GM12878 (cell line): ENCODE measurements at regions of chr12 and their contacts with region 1.

Region 1: GRCh38 chr12:38324896-38325295 is 8.3 kb downstream of the ALG10B start:
- DNase-seq: no peak
- ATAC-seq: no peak
- H3K4me3 ChIP-seq: no peak overlapping the region
- H3K27ac ChIP-seq: no peak overlapping the region
- H3K4me1 ChIP-seq: no peaks in the 10 kb centered on the region
- H3K27me3 ChIP-seq: no peaks in the 10 kb centered on the region
- CTCF ChIP-seq: no peak
- EP300 ChIP-seq: no peak
- POLR2A ChIP-seq: no peak
- RAD21 ChIP-seq: no peak

Region 2: DNA sequence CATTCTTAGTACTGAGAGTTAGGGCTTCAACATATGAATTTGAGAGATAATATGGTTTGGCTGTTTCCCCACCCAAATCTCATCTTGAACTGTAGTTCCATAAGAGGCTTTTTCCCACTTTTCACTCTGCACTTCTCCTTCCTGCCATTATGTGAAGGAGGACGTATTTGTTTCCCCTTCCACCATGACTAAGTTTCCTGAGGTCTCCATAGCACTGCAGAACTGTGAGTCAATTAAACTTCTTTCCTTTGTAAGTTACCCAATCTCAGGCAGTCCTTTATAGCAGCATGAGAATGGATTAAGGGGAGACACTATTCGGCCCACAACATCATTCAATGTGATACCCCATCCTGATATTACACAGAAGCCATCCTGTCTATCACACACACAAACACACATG is 45.1 kb before region 1 on chr12:
- CTCF ChIA-PET with region 1: no interaction called
- POLR2A ChIA-PET with region 1: no interaction called
- RAD21 ChIA-PET with region 1: no interaction called
- SMC1A ChIA-PET with region 1: no interaction called
- in situ Hi-C with region 1: no loop called
- intact Hi-C with region 1: no loop called
- DNase-seq: no peak
- ATAC-seq: no peak
- H3K4me3 ChIP-seq: no peak overlapping the region
- H3K27ac ChIP-seq: no peak overlapping the region
- H3K4me1 ChIP-seq: no peaks in the 10 kb centered on the region
- H3K27me3 ChIP-seq: no peaks in the 10 kb centered on the region
- CTCF ChIP-seq: no peak
- EP300 ChIP-seq: no peak
- POLR2A ChIP-seq: no peak
- RAD21 ChIP-seq: no peak

Region 3: DNA sequence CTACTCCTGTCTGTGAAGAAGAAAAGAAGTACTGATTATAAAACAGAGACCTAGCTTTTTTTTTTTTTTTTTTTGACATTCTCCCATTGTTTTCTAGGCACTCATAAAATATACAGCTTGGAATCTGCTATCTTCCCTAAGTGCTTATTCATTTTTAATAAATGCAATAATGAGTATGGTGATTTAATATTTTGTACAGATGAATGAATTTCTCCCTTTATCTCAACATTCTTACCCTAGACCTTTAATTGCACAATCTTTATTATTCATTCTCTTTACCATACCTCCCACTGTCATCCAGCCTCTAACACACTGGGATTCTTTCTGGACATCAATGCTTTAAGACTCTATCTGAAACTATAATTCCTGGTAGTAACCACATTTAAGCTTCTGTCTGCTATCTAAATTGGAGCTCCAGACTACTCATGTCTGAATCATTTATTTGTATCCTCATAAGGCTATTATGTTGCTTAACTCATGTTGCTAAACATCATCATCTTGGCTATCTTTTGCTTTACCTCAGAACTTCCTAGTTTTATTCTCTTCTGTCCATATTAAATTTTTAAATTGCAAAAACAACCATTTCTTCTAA is 261.9 kb after region 1 on chr12:
- CTCF ChIA-PET with region 1: no interaction called
- POLR2A ChIA-PET with region 1: no interaction called
- RAD21 ChIA-PET with region 1: no interaction called
- SMC1A ChIA-PET with region 1: no interaction called
- in situ Hi-C with region 1: no loop called
- intact Hi-C with region 1: loop called (anchors 10 kb)
- DNase-seq: no peak
- ATAC-seq: no peak
- H3K4me3 ChIP-seq: no peak overlapping the region
- H3K27ac ChIP-seq: no peak overlapping the region
- H3K4me1 ChIP-seq: no peaks in the 10 kb centered on the region
- H3K27me3 ChIP-seq: no peaks in the 10 kb centered on the region
- CTCF ChIP-seq: no peak
- EP300 ChIP-seq: no peak
- POLR2A ChIP-seq: no peak
- RAD21 ChIP-seq: no peak

Region 4: GRCh38 chr12:38921025-38921677 is 596.3 kb after region 1 on chr12:
- CTCF ChIA-PET with region 1: interaction called, 6 read pairs
- POLR2A ChIA-PET with region 1: no interaction called
- RAD21 ChIA-PET with region 1: interaction called, 18 read pairs
- SMC1A ChIA-PET with region 1: interaction called, 5 read pairs
- in situ Hi-C with region 1: no loop called
- intact Hi-C with region 1: no loop called
- DNase-seq: no peak
- ATAC-seq: peak; percentile 95
- H3K4me3 ChIP-seq: no peak overlapping the region
- H3K27ac ChIP-seq: no peak overlapping the region
- H3K4me1 ChIP-seq: no peaks in the 10 kb centered on the region
- H3K27me3 ChIP-seq: no peaks in the 10 kb centered on the region
- CTCF ChIP-seq: peak; percentile 60 to 73 (median 61)
- EP300 ChIP-seq: no peak
- POLR2A ChIP-seq: no peak
- RAD21 ChIP-seq: peak; percentile 63